ENCODE measurements at regions of chr5 and their contacts with region 1.

Region 1: DNA sequence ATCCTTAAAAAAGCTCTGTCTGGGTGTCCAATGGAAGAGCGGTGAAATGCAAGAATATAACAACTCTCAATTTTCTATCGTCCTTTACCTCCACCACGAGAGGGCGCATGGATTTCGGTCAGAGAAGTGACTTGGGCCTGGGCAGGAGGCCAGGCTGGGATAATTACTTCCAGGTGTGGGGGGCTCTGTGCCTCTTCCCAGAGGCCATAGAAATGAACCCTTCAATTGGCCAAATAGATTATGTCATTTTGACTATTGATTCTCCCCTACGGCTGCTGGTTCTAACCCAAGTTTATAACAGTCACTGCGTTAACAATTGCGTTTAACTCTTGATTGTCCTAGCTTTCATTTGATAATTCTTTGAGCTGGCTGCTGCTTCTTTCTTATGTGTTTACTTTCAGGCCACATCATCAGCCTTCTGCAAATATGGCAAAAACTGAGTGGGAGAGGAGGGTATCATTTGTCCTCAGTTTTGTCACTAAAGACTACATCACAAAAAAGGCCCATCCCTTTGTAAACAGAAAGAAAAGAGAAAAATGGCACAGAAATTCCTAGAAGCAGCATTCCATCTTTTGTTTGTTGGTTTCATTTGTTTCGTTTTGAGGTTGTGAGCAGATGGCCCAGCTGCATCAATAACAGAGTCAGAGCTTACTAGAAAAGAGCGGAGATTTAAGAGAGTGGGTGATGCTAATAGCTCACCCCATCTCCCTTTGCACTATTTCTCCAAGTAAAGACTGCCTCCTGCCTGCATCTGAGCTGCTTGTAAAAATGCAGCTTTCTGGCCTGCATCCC is 45.4 kb upstream of the ZFR start:
- DNase-seq: peak; percentile 64
- H3K27ac ChIP-seq: no peak overlapping the region; the same call in 1 of the 2 replicates
- CTCF ChIP-seq: peak; percentile 89

Region 2: DNA sequence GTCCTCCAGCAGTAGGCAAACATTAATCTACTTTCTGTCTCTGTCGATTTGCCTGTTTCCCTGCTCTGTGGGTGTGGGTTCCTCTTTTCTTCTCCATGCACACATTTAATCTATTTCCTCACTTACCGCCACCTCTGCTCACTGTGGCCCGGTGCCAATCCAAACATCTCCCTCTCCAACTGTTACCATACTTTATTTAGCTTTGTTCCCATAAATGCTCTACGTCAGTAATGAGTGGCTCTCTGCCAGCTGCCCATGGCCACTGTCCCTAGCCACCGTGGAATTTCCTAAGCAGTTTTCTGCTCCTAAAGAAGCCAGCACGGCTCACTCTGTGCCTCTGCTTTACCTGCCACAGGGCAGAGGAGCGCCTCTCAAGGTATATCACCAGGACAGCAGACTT is 296.4 kb before region 1 on chr5:
- CTCF ChIA-PET with region 1: no interaction called
- POLR2A ChIA-PET with region 1: no interaction called
- DNase-seq: no peak
- H3K27ac ChIP-seq: no peak overlapping the region
- CTCF ChIP-seq: no peak

Region 3: GRCh38 chr5:32507733-32508434 is 17.9 kb after region 1 on chr5:
- CTCF ChIA-PET with region 1: interaction called, 12 read pairs
- POLR2A ChIA-PET with region 1: no interaction called
- DNase-seq: peak; percentile 80
- H3K27ac ChIP-seq: peak overlapping the region; percentile 99
- CTCF ChIP-seq: no peak

Region 4: DNA sequence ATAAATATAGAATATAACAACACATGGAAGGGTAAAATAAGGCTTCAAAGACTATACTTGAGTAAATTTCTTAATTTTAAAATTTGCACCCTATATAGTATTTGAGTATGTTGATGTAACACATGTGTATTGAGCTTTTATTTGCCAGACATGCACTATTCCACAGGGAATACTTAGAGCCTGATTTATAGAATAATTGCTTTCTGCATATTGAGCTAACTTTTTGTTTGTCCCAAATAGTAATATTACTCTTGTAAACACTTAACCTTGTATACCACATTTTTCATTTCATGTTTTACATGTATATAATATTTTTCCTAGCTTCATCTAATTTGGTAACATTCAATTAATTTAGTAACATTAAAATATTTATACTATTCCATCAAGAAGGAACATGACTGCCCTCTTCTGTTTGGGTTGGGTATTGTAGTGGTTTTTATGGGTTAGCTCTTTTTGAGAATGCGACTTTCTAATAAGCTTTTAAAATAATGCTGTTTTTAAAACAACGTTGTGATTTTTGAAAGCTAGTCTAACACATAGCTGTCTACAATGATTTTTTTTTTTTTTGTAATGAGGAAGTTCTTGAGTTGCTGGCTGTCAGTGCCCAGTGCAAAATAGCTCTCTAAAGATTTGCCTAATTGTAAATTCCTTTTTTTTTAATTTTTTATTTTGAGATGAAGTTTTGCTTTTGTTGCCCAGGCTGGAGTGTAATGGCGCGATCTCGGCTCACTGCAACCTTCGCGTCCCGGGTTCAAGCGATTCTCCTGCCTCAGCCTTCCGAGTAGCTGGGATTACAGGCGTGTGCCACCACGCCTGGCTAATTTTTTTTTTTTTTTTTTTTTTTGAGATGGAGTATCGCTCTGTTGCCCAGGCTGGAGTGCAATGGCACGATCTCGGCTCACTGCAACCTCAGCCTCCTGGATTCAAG is 100.2 kb after region 1 on chr5:
- CTCF ChIA-PET with region 1: interaction called, 40 read pairs
- POLR2A ChIA-PET with region 1: no interaction called
- DNase-seq: peak; percentile 40
- H3K27ac ChIP-seq: no peak overlapping the region
- CTCF ChIP-seq: peak; percentile 90

Region 5: DNA sequence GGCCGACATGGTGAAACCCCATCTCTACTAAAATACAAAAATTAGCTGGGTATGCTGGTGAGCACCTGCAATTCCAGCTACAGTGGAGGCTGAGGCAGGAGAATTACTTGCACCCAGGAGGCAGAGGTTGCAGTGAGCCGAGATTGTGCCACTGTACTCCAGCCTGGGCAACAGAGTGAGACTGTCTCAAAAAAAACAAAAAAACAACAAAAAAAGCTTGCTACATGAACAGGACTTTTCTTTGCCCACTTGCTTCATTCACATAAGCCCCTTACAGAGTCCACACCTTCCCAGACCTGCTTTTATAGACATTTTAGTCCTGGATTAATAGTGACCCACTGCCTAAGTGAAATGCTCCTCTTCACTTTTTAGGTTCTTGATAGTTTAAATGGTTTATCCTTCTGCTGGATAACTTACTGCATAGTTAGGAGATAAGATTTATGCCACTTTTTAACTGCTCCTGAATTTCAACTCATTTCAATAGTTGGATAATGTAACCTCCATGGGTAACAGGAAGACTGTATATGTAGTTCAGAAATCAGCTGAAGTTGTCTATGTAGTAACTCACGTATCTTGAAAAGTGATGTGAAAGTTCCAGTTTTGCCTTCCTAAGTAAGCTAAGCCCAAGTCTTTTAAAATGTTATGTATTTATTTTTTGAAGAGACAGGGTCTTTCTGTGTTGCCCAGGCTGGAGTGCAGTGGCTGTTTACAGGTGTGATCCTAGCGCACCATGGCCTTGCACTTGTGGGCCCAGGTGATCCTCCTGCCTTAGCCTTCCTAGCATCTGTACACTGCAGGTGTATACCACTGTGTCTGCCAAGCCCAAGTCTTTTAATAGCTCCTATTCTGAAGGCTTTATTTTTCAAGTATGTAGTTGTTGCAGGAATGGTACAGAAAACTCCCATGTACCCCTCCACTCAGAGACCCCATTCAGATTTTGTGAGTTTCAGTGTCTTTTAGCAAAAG is 115.1 kb after region 1 on chr5:
- CTCF ChIA-PET with region 1: no interaction called
- POLR2A ChIA-PET with region 1: no interaction called
- DNase-seq: no peak
- H3K27ac ChIP-seq: no peak overlapping the region
- CTCF ChIP-seq: no peak